ENCODE measurements at regions of chr14 and their contacts with region 1.

Region 1: GRCh38 chr14:20682435-20683124 is 1.8 kb upstream of the RNASE4 start:
- DNase-seq: peak; percentile 92
- H3K4me3 Mint-ChIP-seq: no peak overlapping the region
- H3K27ac Mint-ChIP-seq: no peak overlapping the region
- H3K4me1 Mint-ChIP-seq: peaks cover 27% of the 10 kb centered on the region
- H3K27me3 Mint-ChIP-seq: peaks cover 2% of the 10 kb centered on the region

Region 2: DNA sequence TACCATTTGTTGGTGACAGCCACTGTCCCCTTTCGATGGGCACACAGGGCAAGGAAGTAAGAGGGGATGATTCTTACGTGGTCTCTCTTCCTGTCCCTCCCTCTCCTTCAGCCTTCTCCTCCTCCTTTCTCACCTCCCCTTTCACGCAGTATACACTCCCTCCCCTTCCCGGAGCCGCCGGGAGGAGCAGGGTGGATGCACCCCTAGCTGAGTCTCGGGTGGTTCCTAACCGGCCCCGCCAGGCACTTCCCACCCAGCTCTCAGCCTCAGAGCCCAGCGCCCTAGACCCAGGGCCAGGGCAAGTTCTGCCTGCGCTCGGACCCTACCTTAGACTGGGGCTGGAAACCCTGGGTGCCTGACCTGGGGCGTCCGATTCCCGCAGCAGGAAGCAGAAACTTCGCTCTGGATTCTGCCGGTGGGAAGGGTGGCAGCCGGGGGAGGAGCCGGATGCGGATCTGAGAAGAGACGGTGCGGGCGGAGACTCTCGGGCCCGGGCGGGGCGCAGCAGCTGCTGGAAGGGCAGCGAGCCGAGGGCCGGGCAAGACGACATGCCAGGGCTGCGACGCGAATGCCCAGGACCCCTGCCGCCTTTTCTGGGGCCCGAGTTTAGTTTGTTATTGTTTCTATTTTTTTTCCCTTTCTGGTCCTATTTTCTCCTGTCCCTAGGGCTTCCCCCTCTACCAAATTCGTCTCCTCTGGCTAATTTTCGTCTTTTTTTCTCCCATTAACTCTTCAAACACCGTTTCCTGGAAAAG is 269.4 kb before region 1 on chr14 and contains the start of gene TEP1:
- intact Hi-C with region 1: loop called (anchors 5 kb)
- DNase-seq: peak; percentile 93
- H3K4me3 Mint-ChIP-seq: peak within 1 kb of the TSS; percentile 97
- H3K27ac Mint-ChIP-seq: peak within 1 kb of the TSS; percentile 96
- H3K4me1 Mint-ChIP-seq: peaks cover 43% of the 10 kb centered on the region
- H3K27me3 Mint-ChIP-seq: no peaks in the 10 kb centered on the region
- total RNA-seq, gene TEP1: 34.6 and 35.8 TPM in 2 replicates

Region 3: DNA sequence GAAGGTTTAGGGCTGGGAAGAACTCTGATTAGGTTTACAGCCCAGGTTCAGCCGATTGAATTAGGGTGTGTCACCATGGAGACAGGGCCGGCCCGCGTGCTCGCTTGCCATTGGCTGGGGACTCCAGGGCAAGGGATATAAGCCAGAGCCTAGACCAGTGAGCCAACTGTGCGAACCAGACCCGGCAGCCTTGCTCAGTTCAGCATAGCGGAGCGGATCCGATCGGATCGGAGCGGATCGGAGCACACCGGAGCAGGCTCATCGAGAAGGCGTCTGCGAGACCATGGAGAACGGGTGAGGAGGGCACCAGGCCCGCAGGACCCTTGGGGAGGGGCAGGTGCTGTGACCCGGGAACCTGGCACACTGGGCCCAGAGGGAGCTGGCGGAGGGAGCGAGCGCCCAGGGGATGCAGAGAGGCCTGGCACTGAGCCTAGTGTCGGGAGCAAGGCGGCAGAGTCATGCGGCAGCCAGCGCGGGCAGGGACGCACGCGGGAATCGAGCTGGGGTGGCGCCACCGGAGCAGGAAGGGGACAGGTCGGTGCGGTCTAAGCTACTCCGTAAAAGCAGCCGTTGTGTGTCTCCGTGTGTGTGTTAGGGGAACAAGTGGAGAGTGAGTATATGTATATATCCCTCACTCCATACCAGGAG is 213.2 kb before region 1 on chr14 and contains the start of gene PNP:
- intact Hi-C with region 1: loop called (anchors 2 kb)
- DNase-seq: peak; percentile 96
- H3K4me3 Mint-ChIP-seq: peak within 1 kb of the TSS; percentile 95
- H3K27ac Mint-ChIP-seq: peak within 1 kb of the TSS; percentile 100
- H3K4me1 Mint-ChIP-seq: peaks cover 36% of the 10 kb centered on the region
- H3K27me3 Mint-ChIP-seq: peaks cover 2% of the 10 kb centered on the region
- total RNA-seq, gene PNP: 155 and 158 TPM in 2 replicates

Region 4: DNA sequence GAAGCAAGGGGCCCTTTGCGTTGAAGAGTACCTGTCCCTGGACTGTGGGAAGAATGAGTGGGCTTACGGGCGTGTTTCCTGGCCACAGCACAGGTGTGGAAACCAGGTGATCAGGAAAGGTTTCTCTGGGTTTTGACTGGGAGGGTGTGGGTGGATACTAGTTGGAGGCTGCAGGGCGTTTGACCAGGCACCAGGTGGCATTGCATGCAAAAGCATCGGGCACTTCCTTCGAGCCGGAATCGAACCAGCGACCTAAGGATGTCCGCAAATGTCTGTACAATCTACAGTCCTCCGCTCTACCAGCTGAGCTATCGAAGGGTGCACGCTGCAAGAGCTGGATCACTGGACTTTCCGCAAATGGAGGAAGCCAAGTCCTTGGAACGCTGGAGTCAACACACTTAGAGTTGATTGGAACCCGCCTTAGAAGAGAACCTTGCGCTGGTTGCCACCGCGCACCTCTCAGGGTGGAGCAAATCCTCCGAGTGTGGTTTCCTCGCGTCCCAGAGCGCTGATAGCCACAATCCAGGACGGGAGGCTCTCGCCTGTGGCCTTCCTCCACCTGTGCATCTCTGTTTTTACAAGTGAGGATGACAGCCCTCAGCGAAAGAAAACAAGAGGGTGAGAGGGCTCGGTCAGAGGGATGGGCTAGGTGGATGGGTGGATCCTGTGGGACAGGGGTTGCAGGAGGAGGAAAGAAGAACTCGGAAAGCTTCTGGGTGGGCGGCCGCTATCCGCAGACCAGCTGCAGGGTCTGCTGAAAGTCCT is 19.4 kb before region 1 on chr14:
- intact Hi-C with region 1: loop called (anchors 1 kb)
- DNase-seq: peak; percentile 93
- H3K4me3 Mint-ChIP-seq: peak overlapping the region; percentile 86
- H3K27ac Mint-ChIP-seq: peak overlapping the region; percentile 21
- H3K4me1 Mint-ChIP-seq: peaks cover 35% of the 10 kb centered on the region
- H3K27me3 Mint-ChIP-seq: peaks cover 17% of the 10 kb centered on the region

Region 5: GRCh38 chr14:21103710-21104447 is 421.3 kb after region 1 on chr14:
- intact Hi-C with region 1: loop called (anchors 5 kb)
- DNase-seq: peak; percentile 98
- H3K4me3 Mint-ChIP-seq: peak overlapping the region; percentile 93
- H3K27ac Mint-ChIP-seq: peak overlapping the region; percentile 94
- H3K4me1 Mint-ChIP-seq: peaks cover 35% of the 10 kb centered on the region
- H3K27me3 Mint-ChIP-seq: peaks cover 9% of the 10 kb centered on the region

Measured in activated CD4-positive, alpha-beta T cell treated with anti-CD3 and anti-CD28 coated beads, Interleukin-2, amount 10 ng/mL, durations not matched to agents 24 days and 14 days (primary cell).